AG04450 (cell line): ENCODE measurements at regions of chr6 and their contacts with region 1.

Region 1: DNA sequence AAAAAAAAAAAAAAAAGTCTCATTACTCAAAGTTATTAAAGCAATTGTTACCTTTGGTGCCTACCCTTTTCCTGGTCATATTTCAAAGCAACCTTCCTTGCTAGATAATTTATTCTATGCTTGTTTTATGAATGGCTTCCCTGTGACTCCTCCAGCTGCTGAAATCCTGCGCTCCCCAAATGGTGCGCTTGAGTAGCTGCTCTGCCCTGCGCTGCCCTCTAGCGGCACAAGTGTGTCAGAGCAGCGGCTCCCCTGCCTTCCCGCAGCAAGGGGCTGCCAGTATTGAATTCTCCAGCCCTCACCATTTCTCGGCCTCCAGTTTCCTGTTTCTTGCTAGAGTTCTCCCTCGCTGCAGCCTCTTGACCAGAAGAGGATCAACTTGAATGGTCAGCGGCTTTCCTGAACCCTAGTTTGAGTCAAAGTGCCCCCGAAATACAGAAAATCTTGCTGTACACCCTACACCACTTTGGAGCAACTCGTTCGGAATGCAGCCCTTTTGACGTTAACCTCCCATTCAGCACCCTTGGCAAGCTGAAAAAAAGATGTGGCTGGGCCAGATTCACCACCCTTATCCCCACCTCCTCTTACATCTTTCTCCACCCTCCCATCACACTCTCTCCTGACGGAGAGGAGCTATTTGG is 60.4 kb upstream of the KLHL31 start:
- DNase-seq: peak; percentile 57
- H3K4me3 ChIP-seq: no peak overlapping the region
- H3K27ac ChIP-seq: no peak overlapping the region
- H3K27me3 ChIP-seq: no peaks in the 10 kb centered on the region
- CTCF ChIP-seq: peak; percentile 97

Region 2: GRCh38 chr6:53492860-53493634 is 232.9 kb before region 1 on chr6:
- CTCF ChIA-PET with region 1: interaction called, 541 read pairs
- POLR2A ChIA-PET with region 1: no interaction called
- DNase-seq: peak; percentile 36
- H3K4me3 ChIP-seq: peak overlapping the region; percentile 40
- H3K27ac ChIP-seq: peak overlapping the region; percentile 58
- H3K27me3 ChIP-seq: no peaks in the 10 kb centered on the region
- CTCF ChIP-seq: peak; percentile 72

Region 3: GRCh38 chr6:53517056-53517455 is 208.9 kb before region 1 on chr6:
- CTCF ChIA-PET with region 1: interaction called, 51 read pairs
- POLR2A ChIA-PET with region 1: no interaction called
- DNase-seq: no peak
- H3K4me3 ChIP-seq: no peak overlapping the region
- H3K27ac ChIP-seq: no peak overlapping the region
- H3K27me3 ChIP-seq: no peaks in the 10 kb centered on the region
- CTCF ChIP-seq: no peak

Region 4: DNA sequence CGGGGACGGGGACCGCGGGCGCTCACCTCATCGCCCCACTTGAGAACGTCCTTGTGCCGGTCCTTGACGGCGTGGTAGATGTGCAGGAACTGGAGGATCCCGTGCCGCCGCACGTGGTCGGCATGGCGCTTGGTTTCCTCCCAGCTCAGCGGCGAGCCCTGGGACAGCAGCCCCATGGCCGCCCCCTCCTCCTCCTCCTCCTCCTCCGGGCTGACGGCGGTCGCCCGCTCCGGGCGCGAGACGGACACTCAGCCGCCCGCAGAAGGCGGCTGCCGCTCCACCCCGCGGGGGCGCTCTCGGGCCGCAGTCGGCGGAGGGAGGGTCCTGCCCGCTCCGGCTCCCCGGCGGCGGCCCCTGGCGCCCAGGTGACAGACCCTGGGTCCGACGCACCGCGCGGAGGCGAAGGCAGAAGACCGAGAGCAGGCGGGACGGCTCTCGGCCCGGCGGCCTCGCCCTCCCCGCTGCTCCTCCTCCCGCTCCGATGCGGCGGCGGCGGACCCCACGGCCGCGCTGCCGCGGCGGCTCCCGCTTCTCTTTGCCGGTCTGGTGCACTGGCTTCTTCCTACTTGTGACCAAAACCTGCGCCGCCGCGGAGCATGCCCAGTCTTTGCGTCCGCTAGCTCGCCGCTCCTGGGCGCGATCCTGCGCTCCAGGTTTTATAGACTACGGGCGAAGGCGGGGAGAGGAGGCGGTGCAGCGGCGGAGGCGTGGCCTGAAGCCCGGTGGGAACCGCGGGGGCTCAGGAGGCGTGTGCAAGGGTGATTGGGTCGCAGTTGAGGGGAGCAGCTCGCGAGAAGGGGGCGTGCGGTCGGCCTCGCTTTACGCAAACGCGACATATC is 181.2 kb before region 1 on chr6 and contains the start of gene GCLC:
- CTCF ChIA-PET with region 1: interaction called, 12 read pairs
- POLR2A ChIA-PET with region 1: interaction called, 4 read pairs
- DNase-seq: peak; percentile 89
- H3K4me3 ChIP-seq: peak within 1 kb of the TSS; percentile 95
- H3K27ac ChIP-seq: peak within 1 kb of the TSS; percentile 75
- H3K27me3 ChIP-seq: no peaks in the 10 kb centered on the region
- CTCF ChIP-seq: peak; percentile 47
- polyA plus RNA-seq, gene GCLC: 74.8 and 89.3 TPM in 2 replicates

Region 5: GRCh38 chr6:53741034-53741823 is 15.3 kb after region 1 on chr6:
- CTCF ChIA-PET with region 1: interaction called, 30 read pairs
- POLR2A ChIA-PET with region 1: no interaction called
- DNase-seq: no peak
- H3K4me3 ChIP-seq: no peak overlapping the region
- H3K27ac ChIP-seq: no peak overlapping the region
- H3K27me3 ChIP-seq: no peaks in the 10 kb centered on the region
- CTCF ChIP-seq: no peak

Region 6: DNA sequence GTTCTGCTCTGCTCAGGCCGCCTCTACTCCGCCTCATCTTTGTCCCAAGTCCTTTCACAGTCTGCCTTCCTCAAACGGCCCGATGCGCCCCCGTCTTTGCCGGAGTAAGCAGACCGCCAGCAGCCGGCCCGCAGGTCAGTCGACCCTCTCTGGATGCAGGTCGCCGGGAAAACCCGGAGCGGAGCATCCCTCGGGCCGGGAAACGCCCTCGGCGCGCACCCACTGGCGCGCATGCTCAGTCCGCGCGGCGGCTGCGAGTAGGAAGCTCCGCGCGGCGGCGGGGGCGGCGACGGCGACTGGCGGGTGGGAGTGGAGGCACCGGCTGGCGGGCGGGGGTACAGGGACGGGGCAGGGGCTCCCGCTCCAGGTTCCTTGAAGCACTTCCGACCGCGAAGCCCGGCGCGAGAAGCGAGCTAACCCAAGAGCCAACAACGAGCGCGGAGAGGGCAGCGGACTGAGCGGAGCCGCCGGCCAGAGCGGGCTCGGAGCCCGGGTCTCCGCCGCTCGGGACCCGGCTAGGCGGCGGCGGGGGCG is 68.9 kb after region 1 on chr6 and contains the start of gene LRRC1:
- CTCF ChIA-PET with region 1: interaction called, 34 read pairs
- POLR2A ChIA-PET with region 1: no interaction called
- DNase-seq: peak; percentile 80
- H3K4me3 ChIP-seq: peak within 1 kb of the TSS; percentile 97
- H3K27ac ChIP-seq: peak within 1 kb of the TSS; percentile 88
- H3K27me3 ChIP-seq: no peaks in the 10 kb centered on the region
- CTCF ChIP-seq: no peak
- polyA plus RNA-seq, gene LRRC1: 11.5 and 13.9 TPM in 2 replicates

Region 7: DNA sequence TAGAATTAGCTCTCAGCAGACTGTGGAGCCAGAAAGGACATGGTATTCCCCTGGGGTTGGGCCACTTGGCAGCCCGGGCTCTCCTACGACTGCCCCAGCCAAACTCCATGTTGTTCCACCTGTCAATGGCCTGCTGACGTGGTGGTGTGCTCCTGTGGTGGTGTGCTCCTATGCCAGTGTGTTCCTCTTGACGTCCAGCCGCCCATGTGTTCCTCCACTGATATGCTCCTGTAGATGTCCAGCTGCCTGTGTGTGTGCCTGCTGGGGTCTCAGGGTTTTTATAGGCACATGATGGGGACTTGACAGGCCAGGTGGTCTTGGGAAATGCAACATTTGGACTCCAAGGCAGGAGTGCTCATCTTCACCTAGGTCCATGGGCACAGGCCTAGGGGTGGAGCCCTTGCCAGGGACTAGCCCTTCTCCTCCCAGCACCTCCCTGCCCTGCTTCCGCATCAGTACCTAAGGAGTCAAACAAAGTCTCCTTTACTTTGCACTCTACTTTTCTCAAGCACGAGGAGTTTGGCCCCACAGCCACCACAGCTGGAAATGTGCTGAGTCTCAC is 715.9 kb after region 1 on chr6:
- CTCF ChIA-PET with region 1: no interaction called
- POLR2A ChIA-PET with region 1: no interaction called
- DNase-seq: no peak
- H3K4me3 ChIP-seq: no peak overlapping the region
- H3K27ac ChIP-seq: no peak overlapping the region
- H3K27me3 ChIP-seq: no peaks in the 10 kb centered on the region
- CTCF ChIP-seq: no peak